ENCODE measurements at regions of chr7 and their contacts with region 1.

Region 1: GRCh38 chr7:2632733-2633537 is 1.1 kb downstream of the TTYH3 start:
- DNase-seq: no peak
- H3K4me3 ChIP-seq: peak overlapping the region; percentile 98
- H3K27ac ChIP-seq: peak overlapping the region; percentile 98
- H3K4me1 ChIP-seq: peaks cover 15% of the 10 kb centered on the region
- H3K27me3 ChIP-seq: no peaks in the 10 kb centered on the region
- CTCF ChIP-seq: no peak

Region 2: GRCh38 chr7:2647594-2648167 is 14.7 kb after region 1 on chr7:
- CTCF ChIA-PET with region 1: no interaction called
- POLR2A ChIA-PET with region 1: interaction called, 16 read pairs
- intact Hi-C with region 1: no loop called
- DNase-seq: no peak
- H3K4me3 ChIP-seq: no peak overlapping the region
- H3K27ac ChIP-seq: no peak overlapping the region
- H3K4me1 ChIP-seq: peaks cover 19% of the 10 kb centered on the region
- H3K27me3 ChIP-seq: no peaks in the 10 kb centered on the region
- CTCF ChIP-seq: no peak

Measured in A673 (cell line).